ENCODE measurements at regions of chr2 and their contacts with region 1.

Region 1: DNA sequence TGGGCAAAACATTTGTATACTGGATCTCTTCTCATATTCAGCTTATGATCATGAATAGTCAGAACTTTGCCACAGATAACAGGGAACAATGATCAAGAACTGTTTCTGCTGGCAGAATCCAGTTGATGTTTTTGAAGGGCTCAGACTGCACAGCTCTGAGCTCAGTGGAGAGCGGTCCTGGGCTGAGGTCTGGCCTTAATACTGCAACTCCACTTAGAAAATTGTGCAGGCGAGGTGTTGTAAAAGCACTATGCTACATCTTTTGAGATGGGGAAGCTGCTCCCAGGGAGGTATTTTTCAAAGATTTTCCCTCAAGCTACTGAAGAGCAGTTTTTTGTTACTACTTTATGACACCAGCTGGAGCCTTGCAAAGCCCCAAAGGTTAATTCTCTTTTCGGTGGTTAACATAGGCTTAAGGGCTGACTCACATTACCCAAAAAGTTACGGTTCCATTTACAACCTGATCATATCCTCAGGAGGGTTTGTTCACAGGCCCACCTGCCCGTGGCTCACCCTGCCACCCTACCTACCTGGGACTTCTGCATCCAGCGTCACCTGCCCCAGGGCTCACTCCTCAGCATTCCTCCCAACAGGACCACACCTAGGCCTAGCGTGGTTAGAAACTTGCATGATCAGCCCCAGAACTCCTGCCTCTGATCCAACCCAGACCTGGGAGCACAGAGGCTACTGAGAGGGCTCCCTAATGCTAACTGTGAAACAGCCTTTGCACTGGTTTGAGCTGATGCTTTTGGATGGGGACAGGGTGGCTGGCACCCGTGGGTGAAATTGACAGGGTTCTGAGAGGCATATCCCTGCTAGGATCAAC is 114.4 kb downstream of the NCK2 start:
- DNase-seq: peak; percentile 46
- H3K4me3 Mint-ChIP-seq: no peak overlapping the region
- H3K27ac Mint-ChIP-seq: peak overlapping the region; percentile 91
- H3K4me1 Mint-ChIP-seq: peaks cover 93% of the 10 kb centered on the region
- H3K27me3 Mint-ChIP-seq: no peaks in the 10 kb centered on the region

Region 2: GRCh38 chr2:105737980-105738657 is 121.0 kb before region 1 on chr2:
- CTCF ChIA-PET with region 1: interaction called, 3 read pairs
- intact Hi-C with region 1: loop called (anchors 2 kb)
- DNase-seq: peak; percentile 45
- H3K4me3 Mint-ChIP-seq: peak overlapping the region; percentile 69
- H3K27ac Mint-ChIP-seq: peak overlapping the region; percentile 97
- H3K4me1 Mint-ChIP-seq: peaks cover 71% of the 10 kb centered on the region
- H3K27me3 Mint-ChIP-seq: no peaks in the 10 kb centered on the region

Region 3: DNA sequence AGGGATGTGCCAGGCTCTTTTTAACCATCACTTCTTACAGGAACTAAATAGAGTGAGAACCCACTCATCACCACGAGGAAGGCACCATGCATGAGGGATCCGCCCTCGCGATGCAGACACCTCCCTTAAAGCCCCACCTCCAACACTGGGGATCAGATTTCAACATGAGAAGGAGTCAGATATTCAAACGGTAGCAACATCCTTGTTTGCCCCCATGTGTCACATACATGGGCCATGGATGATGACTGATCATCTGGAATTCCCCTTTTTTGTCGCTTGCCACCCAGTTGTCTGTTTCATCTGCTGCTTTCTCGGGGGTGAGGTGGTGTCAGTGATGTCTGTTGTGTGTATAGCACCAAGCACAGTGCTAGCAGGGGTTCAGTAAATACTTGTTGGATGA is 56.5 kb before region 1 on chr2:
- CTCF ChIA-PET with region 1: interaction called, 3 read pairs
- intact Hi-C with region 1: loop called (anchors 1 kb)
- DNase-seq: peak; percentile 82
- H3K4me3 Mint-ChIP-seq: peak overlapping the region; percentile 8
- H3K27ac Mint-ChIP-seq: peak overlapping the region; percentile 86
- H3K4me1 Mint-ChIP-seq: peaks cover 94% of the 10 kb centered on the region
- H3K27me3 Mint-ChIP-seq: no peaks in the 10 kb centered on the region

Region 4: GRCh38 chr2:105836840-105837692 is 22.0 kb before region 1 on chr2:
- CTCF ChIA-PET with region 1: interaction called, 6 read pairs
- intact Hi-C with region 1: loop called (anchors 1 kb)
- DNase-seq: peak; percentile 71
- H3K4me3 Mint-ChIP-seq: no peak overlapping the region
- H3K27ac Mint-ChIP-seq: peak overlapping the region; percentile 84
- H3K4me1 Mint-ChIP-seq: peaks cover 80% of the 10 kb centered on the region
- H3K27me3 Mint-ChIP-seq: no peaks in the 10 kb centered on the region

Region 5: GRCh38 chr2:105934467-105934866 is 75.4 kb after region 1 on chr2:
- CTCF ChIA-PET with region 1: interaction called, 3 read pairs
- intact Hi-C with region 1: loop called (anchors 2 kb)
- DNase-seq: peak; percentile 61
- H3K4me3 Mint-ChIP-seq: peak overlapping the region; percentile 20
- H3K27ac Mint-ChIP-seq: no peak overlapping the region
- H3K4me1 Mint-ChIP-seq: peaks cover 28% of the 10 kb centered on the region
- H3K27me3 Mint-ChIP-seq: no peaks in the 10 kb centered on the region

Measured in activated naive CD4-positive, alpha-beta T cell treated with anti-CD3 and anti-CD28 coated beads for 36 hours (primary cell).